Naive thymus-derived CD4-positive, alpha-beta T cell (primary cell): ENCODE measurements at regions of chr4 and their contacts with region 1.

Region 1: DNA sequence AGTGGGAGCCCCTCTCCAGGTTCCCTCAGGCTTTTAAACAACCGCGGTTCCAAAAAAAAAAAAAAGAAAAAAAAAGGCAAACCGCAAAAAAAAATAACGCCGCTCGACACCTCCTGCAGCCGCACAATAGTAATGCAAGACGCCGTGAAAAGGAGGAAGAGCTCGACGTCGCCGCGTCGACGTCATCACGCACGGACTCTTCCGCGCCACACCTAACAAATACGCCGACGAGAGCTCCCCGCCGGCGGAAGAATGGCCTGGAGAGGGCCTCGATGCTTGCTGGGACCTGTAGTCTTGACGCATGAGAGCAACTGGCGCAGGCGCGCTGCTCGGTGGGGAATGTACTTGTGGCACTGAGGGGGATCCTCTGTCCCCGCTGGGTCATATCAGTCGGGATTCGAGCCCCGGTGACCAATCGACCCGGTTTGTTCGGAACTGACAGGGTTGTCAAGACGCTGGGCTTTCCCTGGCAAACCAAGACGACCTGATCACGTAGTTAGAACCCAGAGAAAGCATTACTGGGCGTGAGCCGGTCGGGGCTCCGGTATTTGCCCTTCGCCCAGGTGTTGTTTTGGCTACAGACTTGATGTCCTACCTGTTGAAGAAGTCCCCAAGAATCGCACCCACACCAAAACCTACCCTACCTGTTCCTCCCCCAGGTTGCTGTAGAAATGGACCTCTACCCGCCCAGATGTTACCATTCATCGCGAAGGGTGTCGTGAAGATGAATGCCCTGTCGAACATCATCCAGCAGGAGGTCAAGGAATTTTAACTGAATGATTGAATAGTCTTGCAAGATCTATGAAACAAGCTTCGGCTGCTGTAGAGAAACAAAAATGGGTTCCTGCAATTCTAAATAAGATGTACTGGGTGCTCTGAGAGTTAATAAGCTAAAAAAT is at the start of gene CBR4:
- DNase-seq: peak; percentile 85 to 97 (median 94)
- ATAC-seq: peak; percentile 97
- H3K4me3 ChIP-seq: peak within 1 kb of the TSS; percentile 64
- H3K4me3 Mint-ChIP-seq: peak within 1 kb of the TSS; percentile 93 to 97 (median 96)
- H3K27ac ChIP-seq: peak within 1 kb of the TSS; percentile 87
- H3K27ac Mint-ChIP-seq: peak within 1 kb of the TSS; percentile 92 to 99 (median 97)
- H3K4me1 ChIP-seq: peaks cover 14 to 19% of the 10 kb centered on the region in 2 donors
- H3K4me1 Mint-ChIP-seq: peaks cover 10 to 51% (median 44%) of the 10 kb centered on the region in 7 donors
- H3K27me3 ChIP-seq: no peaks in the 10 kb centered on the region
- H3K27me3 Mint-ChIP-seq: peaks cover 0 to 16% (median 0%) of the 10 kb centered on the region in 5 donors
- total RNA-seq, gene CBR4: 12.4 to 24.5 (median 15.3) TPM

Region 2: GRCh38 chr4:168480931-168481611 is 529.3 kb before region 1 on chr4:
- CTCF ChIA-PET with region 1: no interaction called
- POLR2A ChIA-PET with region 1: no interaction called
- intact Hi-C with region 1: loop called (anchors 1 kb)
- DNase-seq: peak in 8 of 9 donors; percentile 22 to 85 (median 78)
- ATAC-seq: peak; percentile 75
- H3K4me3 ChIP-seq: peak overlapping the region; percentile 72
- H3K4me3 Mint-ChIP-seq: peak overlapping the region; percentile 88 to 100 (median 98)
- H3K27ac ChIP-seq: peak overlapping the region; percentile 95
- H3K27ac Mint-ChIP-seq: peak overlapping the region; percentile 98 to 100 (median 99)
- H3K4me1 ChIP-seq: peaks cover 20 to 33% of the 10 kb centered on the region in 2 donors
- H3K4me1 Mint-ChIP-seq: peaks cover 46 to 82% (median 74%) of the 10 kb centered on the region in 7 donors
- H3K27me3 ChIP-seq: no peaks in the 10 kb centered on the region
- H3K27me3 Mint-ChIP-seq: no peaks in the 10 kb centered on the region

Region 3: GRCh38 chr4:168831919-168832762 is 178.2 kb before region 1 on chr4:
- CTCF ChIA-PET with region 1: no interaction called
- POLR2A ChIA-PET with region 1: no interaction called
- intact Hi-C with region 1: loop called (anchors 1 to 5 kb)
- DNase-seq: peak in 8 of 9 donors; percentile 31 to 77 (median 44)
- ATAC-seq: peak; percentile 85
- H3K4me3 ChIP-seq: peak overlapping the region; percentile 45
- H3K4me3 Mint-ChIP-seq: peak overlapping the region; percentile 63 to 91 (median 84)
- H3K27ac ChIP-seq: no peak overlapping the region
- H3K27ac Mint-ChIP-seq: peak overlapping the region in 1 of 9 donors; percentile 66
- H3K4me1 ChIP-seq: peaks cover 0 to 5% of the 10 kb centered on the region in 2 donors
- H3K4me1 Mint-ChIP-seq: peaks cover 0 to 21% (median 13%) of the 10 kb centered on the region in 7 donors
- H3K27me3 ChIP-seq: peaks cover 0 to 15% of the 10 kb centered on the region in 2 donors
- H3K27me3 Mint-ChIP-seq: peaks cover 46 to 68% (median 60%) of the 10 kb centered on the region in 5 donors

Region 4: DNA sequence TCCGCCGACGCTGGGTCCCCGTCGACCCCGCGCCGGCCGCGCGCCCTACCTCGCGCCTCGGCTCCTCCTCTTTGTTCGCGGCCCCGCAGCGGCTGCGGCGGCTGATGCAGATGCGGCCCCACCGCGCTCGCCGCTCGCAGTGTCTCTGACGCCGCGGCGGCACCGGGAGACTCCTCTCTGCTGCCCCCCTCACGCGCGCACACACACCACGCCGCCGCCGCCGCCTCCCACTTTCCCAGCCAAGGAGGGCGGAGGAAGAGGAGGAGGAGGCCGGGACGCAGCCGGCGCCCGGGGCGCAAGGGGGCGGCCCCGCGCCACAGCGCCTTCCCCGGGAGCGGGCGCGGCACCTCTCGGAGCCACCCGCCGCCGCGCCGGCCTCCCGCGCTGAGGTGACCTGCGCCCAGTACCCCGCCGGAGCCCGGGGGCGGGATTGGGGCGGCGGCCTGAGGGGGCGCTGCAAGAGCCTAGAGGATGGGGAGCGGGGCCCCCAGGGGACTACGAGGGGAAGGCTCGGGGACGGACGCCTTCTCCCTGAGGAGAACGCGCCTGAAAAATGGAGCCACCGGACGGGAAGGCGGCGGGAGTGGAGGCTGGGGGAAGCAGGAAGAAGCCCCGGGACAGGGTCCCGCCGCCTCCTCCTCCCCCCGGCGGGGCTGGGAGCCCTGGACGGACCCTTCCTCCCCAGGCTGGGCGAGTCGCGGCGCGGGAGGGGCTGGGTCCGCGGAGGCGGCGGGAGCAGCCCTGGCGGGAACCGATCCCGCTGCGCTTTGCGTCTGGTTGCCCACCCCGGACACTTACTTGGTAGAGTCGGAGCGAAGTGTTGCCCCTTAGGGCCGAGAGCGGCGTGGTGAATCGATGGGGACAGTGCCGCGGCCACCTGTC is 260.7 kb after region 1 on chr4 and contains the start of gene SH3RF1:
- CTCF ChIA-PET with region 1: no interaction called
- POLR2A ChIA-PET with region 1: no interaction called
- intact Hi-C with region 1: loop called in 1 of 2 experiments (anchors 1 kb)
- DNase-seq: peak in 5 of 9 donors; percentile 2 to 60 (median 5)
- ATAC-seq: peak; percentile 68
- H3K4me3 ChIP-seq: peak within 1 kb of the TSS; percentile 42
- H3K4me3 Mint-ChIP-seq: peak within 1 kb of the TSS; percentile 46 to 88 (median 76)
- H3K27ac ChIP-seq: no peak within 1 kb of the TSS
- H3K27ac Mint-ChIP-seq: no peak within 1 kb of the TSS
- H3K4me1 ChIP-seq: no peaks in the 10 kb centered on the region
- H3K4me1 Mint-ChIP-seq: peaks cover 0 to 28% (median 16%) of the 10 kb centered on the region in 7 donors
- H3K27me3 ChIP-seq: peaks cover 4% of the 10 kb centered on the region in 2 donors
- H3K27me3 Mint-ChIP-seq: peaks cover 48 to 75% (median 61%) of the 10 kb centered on the region in 5 donors
- total RNA-seq, gene SH3RF1: 0.08 to 3.8 (median 0.50) TPM in 4 of 5 experiments, not detected in the other

Region 5: GRCh38 chr4:169566021-169566818 is 555.8 kb after region 1 on chr4:
- CTCF ChIA-PET with region 1: no interaction called
- POLR2A ChIA-PET with region 1: no interaction called
- intact Hi-C with region 1: loop called in 1 of 2 experiments (anchors 5 kb)
- DNase-seq: peak in 6 of 9 donors; percentile 10 to 50 (median 34)
- ATAC-seq: peak; percentile 66
- H3K4me3 ChIP-seq: no peak overlapping the region
- H3K4me3 Mint-ChIP-seq: no peak overlapping the region
- H3K27ac ChIP-seq: no peak overlapping the region
- H3K27ac Mint-ChIP-seq: peak overlapping the region in 7 of 9 donors; percentile 40 to 84 (median 65)
- H3K4me1 ChIP-seq: no peaks in the 10 kb centered on the region
- H3K4me1 Mint-ChIP-seq: peaks cover 0 to 10% (median 5%) of the 10 kb centered on the region in 7 donors
- H3K27me3 ChIP-seq: no peaks in the 10 kb centered on the region
- H3K27me3 Mint-ChIP-seq: no peaks in the 10 kb centered on the region

Region 6: GRCh38 chr4:169757575-169758184 is 747.3 kb after region 1 on chr4 and contains the start of gene HPF1:
- CTCF ChIA-PET with region 1: no interaction called
- POLR2A ChIA-PET with region 1: no interaction called
- intact Hi-C with region 1: loop called (anchors 1 kb)
- DNase-seq: peak; percentile 84 to 93 (median 89)
- ATAC-seq: peak; percentile 98
- H3K4me3 ChIP-seq: peak within 1 kb of the TSS; percentile 83
- H3K4me3 Mint-ChIP-seq: peak within 1 kb of the TSS; percentile 82 to 92 (median 88)
- H3K27ac ChIP-seq: peak within 1 kb of the TSS; percentile 66
- H3K27ac Mint-ChIP-seq: peak within 1 kb of the TSS; percentile 52 to 81 (median 71)
- H3K4me1 ChIP-seq: peaks cover 0 to 7% of the 10 kb centered on the region in 2 donors
- H3K4me1 Mint-ChIP-seq: peaks cover 19 to 38% (median 30%) of the 10 kb centered on the region in 7 donors
- H3K27me3 ChIP-seq: no peaks in the 10 kb centered on the region
- H3K27me3 Mint-ChIP-seq: peaks cover 0 to 22% (median 0%) of the 10 kb centered on the region in 5 donors
- total RNA-seq, gene HPF1: 9.9 to 23.5 (median 13.8) TPM